CD4-positive, alpha-beta T cell (primary cell): ENCODE measurements at regions of chr18 and their contacts with region 1.

Region 1: DNA sequence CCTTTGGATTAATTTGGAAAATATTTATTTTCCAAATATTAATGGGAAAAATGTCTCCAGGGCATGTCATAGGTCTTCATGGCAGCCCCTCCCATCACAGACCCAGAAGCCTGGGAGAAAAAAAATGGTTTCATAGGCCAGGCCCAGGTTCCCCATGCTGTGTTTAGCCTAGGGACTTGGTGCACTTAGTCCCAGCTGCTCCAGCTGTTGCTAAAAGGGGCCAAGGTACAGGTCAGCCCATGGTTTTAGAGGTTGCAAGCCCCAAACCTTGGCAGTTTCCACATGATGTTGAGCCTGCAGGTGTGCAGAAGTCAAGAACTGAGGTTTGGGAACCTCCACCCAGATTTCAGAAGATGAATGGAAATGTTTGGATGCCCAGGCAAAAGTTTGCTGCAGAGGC is 309.6 kb downstream of the SOCS6 start:
- DNase-seq: no peak
- ATAC-seq: no peak
- H3K4me3 ChIP-seq: no peak overlapping the region
- H3K4me3 Mint-ChIP-seq: no peak overlapping the region
- H3K27ac ChIP-seq: no peak overlapping the region
- H3K27ac Mint-ChIP-seq: peak overlapping the region; percentile 85
- H3K4me1 ChIP-seq: peaks cover 8% of the 10 kb centered on the region
- H3K4me1 Mint-ChIP-seq: peaks cover 16% of the 10 kb centered on the region
- H3K27me3 ChIP-seq: no peaks in the 10 kb centered on the region
- H3K27me3 Mint-ChIP-seq: no peaks in the 10 kb centered on the region
- CTCF ChIP-seq: no peak

Region 2: DNA sequence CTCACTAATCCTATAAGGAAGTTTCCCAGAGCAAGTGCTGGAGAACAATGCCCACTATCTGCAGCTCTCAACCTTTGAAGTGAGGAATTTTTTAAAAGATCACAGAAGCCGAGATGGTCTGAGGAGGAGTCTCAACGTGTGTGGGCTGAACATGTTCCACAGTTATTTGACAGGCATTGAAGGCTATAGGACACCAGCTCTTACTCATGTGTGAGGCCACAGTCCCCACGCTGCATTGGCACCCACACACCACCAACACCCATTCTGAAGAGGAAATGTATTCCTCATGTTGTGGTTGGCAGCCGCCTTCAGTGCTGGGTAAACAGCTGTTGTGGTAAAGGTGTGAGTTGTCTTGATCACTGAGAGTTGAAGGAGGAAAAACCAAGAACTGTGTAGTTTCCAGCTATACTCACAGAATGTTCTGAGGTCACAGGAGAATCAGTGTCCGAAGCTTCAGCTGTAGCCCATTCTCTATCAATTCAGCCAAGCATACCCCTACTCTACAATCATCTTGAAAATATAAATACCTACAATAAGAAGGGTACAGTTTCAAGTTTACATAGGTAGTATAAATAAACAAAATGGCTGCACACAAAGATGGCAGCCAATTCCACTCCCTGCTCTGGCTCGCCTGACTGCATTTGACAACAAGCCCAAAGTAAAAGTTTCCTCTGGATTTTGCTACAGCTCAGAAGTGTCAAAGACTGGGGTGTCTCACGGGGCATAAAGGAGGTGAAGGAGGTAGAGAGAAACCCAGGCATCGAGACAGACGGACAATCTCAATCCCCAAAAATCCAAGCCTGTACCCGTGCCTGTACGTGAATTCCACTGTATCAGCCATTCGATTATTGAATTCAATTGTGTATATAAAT is 662.9 kb before region 1 on chr18:
- CTCF ChIA-PET with region 1: no interaction called
- POLR2A ChIA-PET with region 1: no interaction called
- intact Hi-C with region 1: no loop called
- DNase-seq: peak; percentile 50 to 93 (median 76)
- ATAC-seq: peak; percentile 94
- H3K4me3 ChIP-seq: peak overlapping the region; percentile 29
- H3K4me3 Mint-ChIP-seq: no peak overlapping the region
- H3K27ac ChIP-seq: peak overlapping the region; percentile 51 to 62
- H3K27ac Mint-ChIP-seq: no peak overlapping the region
- H3K4me1 ChIP-seq: peaks cover 49% of the 10 kb centered on the region
- H3K4me1 Mint-ChIP-seq: peaks cover 2% of the 10 kb centered on the region
- H3K27me3 ChIP-seq: no peaks in the 10 kb centered on the region
- H3K27me3 Mint-ChIP-seq: no peaks in the 10 kb centered on the region
- CTCF ChIP-seq: no peak

Region 3: DNA sequence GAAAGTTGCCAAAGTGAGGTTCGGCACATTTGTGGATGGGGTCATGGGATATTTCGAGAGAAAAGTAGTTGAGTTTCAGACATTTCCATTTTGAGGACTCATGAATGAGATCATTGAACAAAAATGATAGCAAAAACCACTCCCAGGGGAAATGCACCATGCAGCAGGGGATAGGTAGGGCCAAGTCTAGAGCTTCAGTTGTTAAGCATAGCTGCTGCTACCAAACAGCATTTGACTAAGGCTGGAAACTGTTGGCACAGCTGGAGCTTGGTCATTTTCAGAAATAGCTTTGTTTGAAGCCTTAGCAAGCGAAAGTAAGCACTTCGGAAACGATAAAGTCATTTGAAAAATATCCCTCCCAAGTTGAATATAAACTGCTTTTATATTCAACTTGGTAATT is 122.2 kb after region 1 on chr18:
- CTCF ChIA-PET with region 1: no interaction called
- POLR2A ChIA-PET with region 1: no interaction called
- intact Hi-C with region 1: loop called in 1 of 2 experiments (anchors 5 kb)
- DNase-seq: no peak
- ATAC-seq: no peak
- H3K4me3 ChIP-seq: no peak overlapping the region
- H3K4me3 Mint-ChIP-seq: no peak overlapping the region
- H3K27ac ChIP-seq: no peak overlapping the region
- H3K27ac Mint-ChIP-seq: no peak overlapping the region
- H3K4me1 ChIP-seq: no peaks in the 10 kb centered on the region
- H3K4me1 Mint-ChIP-seq: no peaks in the 10 kb centered on the region
- H3K27me3 ChIP-seq: no peaks in the 10 kb centered on the region
- H3K27me3 Mint-ChIP-seq: no peaks in the 10 kb centered on the region
- CTCF ChIP-seq: no peak

Region 4: GRCh38 chr18:70781860-70782453 is 183.6 kb after region 1 on chr18:
- CTCF ChIA-PET with region 1: interaction called, 4 read pairs
- POLR2A ChIA-PET with region 1: interaction called, 3 read pairs
- intact Hi-C with region 1: loop called (anchors 5 kb)
- DNase-seq: peak; percentile 39 to 80 (median 61)
- ATAC-seq: peak; percentile 99
- H3K4me3 ChIP-seq: no peak overlapping the region
- H3K4me3 Mint-ChIP-seq: no peak overlapping the region
- H3K27ac ChIP-seq: no peak overlapping the region
- H3K27ac Mint-ChIP-seq: peak overlapping the region; percentile 65
- H3K4me1 ChIP-seq: no peaks in the 10 kb centered on the region
- H3K4me1 Mint-ChIP-seq: peaks cover 23% of the 10 kb centered on the region
- H3K27me3 ChIP-seq: no peaks in the 10 kb centered on the region
- H3K27me3 Mint-ChIP-seq: no peaks in the 10 kb centered on the region
- CTCF ChIP-seq: peak; percentile 66